WTC11 (cell line): ENCODE measurements at regions of chr7 and their contacts with region 1.

Region 1: DNA sequence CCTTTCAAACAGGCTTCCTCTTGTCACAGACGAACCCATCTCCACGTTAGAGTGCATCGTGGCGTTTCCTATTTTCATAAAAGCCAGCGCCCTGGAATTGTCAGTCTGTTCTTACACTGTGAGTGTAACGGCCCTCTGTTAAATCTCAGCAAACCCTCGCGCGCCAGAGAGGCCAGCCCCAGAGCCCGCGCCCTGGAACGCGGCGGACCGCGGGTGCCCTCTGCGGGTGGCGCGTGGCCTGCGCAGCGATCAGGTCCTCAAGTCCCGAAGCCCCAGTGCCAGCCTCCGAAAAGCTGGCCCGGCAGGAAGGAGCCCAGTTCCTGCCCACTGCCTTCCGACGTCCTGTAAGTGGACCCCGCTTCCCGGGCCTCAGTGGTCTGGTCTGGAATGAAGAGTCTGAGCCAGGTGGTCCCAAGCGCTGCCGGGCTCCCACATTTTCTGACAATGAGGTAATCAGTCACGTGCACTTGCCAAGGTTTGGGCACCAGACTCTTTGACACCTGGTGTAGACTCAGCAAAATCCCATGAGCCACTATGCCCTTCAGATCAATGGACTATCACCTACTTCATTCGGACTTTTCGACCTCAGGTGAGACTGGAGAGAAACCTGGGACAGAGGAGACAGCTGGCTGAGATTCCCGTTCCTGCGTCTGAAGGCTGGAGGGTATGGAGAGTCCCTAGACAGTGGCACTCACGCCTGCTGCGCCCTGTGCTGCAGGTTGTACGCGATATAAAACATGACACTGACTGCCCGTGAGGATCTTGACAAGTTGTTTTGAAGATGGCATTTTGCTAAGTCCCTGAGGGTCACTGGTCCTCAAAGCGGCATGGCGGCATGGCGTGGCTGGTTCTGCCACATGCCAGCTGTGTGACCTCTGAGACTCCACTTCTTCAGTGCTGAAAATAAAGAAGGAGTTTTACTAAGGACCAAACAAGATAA is 109.4 kb upstream of the LANCL2 start:
- DNase-seq: peak; percentile 81
- ATAC-seq: peak; percentile 68
- H3K4me3 Mint-ChIP-seq: peak overlapping the region; percentile 85
- H3K27ac Mint-ChIP-seq: no peak overlapping the region
- H3K4me1 Mint-ChIP-seq: peaks cover 6% of the 10 kb centered on the region
- H3K27me3 Mint-ChIP-seq: peaks cover 57% of the 10 kb centered on the region
- CTCF ChIP-seq: peak; percentile 50; the same call in 1 of the 2 replicates

Region 2: GRCh38 chr7:54773472-54774399 is 482.0 kb before region 1 on chr7:
- CTCF ChIA-PET with region 1: interaction called, 22 read pairs
- POLR2A ChIA-PET with region 1: no interaction called
- DNase-seq: peak; percentile 89
- ATAC-seq: peak; percentile 95
- H3K4me3 Mint-ChIP-seq: peak overlapping the region; percentile 45
- H3K27ac Mint-ChIP-seq: no peak overlapping the region
- H3K4me1 Mint-ChIP-seq: peaks cover 5% of the 10 kb centered on the region
- H3K27me3 Mint-ChIP-seq: peaks cover 32% of the 10 kb centered on the region
- CTCF ChIP-seq: peak; percentile 72

Region 3: GRCh38 chr7:54877683-54878082 is 378.1 kb before region 1 on chr7:
- CTCF ChIA-PET with region 1: interaction called, 11 read pairs
- POLR2A ChIA-PET with region 1: no interaction called
- DNase-seq: no peak
- ATAC-seq: no peak; the same call in 1 of the 2 replicates
- H3K4me3 Mint-ChIP-seq: no peak overlapping the region
- H3K27ac Mint-ChIP-seq: no peak overlapping the region
- H3K4me1 Mint-ChIP-seq: peaks cover 25% of the 10 kb centered on the region
- H3K27me3 Mint-ChIP-seq: no peaks in the 10 kb centered on the region
- CTCF ChIP-seq: no peak

Region 4: GRCh38 chr7:55065079-55065478 is 190.7 kb before region 1 on chr7:
- CTCF ChIA-PET with region 1: interaction called, 17 read pairs
- POLR2A ChIA-PET with region 1: no interaction called
- DNase-seq: no peak
- ATAC-seq: no peak
- H3K4me3 Mint-ChIP-seq: no peak overlapping the region
- H3K27ac Mint-ChIP-seq: no peak overlapping the region
- H3K4me1 Mint-ChIP-seq: peaks cover 20% of the 10 kb centered on the region
- H3K27me3 Mint-ChIP-seq: no peaks in the 10 kb centered on the region
- CTCF ChIP-seq: no peak

Region 5: DNA sequence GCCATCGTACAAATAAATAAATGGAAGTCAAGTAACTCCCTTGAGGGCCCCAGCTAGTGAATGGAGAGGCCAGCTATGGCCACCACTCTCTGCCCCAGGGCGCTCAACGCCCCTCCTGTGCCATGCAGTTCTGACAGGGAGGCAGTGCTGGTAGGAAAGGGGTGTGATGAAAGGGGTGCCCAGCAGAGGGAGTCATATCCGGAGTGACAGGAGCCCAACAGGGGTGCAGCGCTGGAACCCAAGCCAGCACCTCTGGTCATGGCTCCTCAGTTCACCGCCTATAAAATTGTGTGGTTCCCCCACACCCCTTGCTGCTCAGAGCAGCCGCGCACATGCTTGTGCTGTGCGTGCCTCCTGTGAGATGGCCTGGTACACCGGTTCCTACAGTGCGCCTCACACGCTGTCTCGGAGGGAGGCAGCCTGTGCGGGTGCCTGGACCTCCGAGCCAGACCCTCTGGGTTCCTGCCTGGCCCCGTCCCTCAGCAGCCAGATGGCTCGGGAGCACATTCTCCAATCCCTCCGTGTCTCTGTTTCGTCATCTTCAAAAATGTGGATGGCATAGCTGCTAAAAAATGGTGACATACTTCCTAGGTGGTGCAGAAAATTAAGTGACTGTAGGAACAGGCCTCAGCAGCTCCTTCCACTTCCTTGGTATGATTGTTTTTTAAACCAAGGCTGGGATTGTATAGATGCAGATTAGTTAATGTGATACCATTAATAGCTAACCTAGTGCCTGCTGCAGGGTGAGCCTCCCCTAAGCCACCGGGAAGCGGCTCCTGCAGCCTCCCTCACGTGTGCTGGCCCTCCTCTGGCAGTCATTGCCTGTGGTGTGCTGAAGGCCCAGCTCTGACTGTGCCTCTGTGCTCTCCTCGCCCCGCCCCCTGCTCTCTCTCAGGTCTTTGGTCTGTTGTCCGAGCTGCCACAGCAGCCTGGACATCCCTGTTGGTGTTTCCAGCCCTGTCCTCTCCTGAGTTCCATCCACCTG is 111.1 kb before region 1 on chr7:
- CTCF ChIA-PET with region 1: interaction called, 67 read pairs
- POLR2A ChIA-PET with region 1: no interaction called
- DNase-seq: peak; percentile 69
- ATAC-seq: peak; percentile 92
- H3K4me3 Mint-ChIP-seq: no peak overlapping the region
- H3K27ac Mint-ChIP-seq: no peak overlapping the region
- H3K4me1 Mint-ChIP-seq: peaks cover 3% of the 10 kb centered on the region; the same call in 1 of the 2 replicates
- H3K27me3 Mint-ChIP-seq: no peaks in the 10 kb centered on the region
- CTCF ChIP-seq: peak; percentile 43; the same call in 1 of the 2 replicates

Region 6: DNA sequence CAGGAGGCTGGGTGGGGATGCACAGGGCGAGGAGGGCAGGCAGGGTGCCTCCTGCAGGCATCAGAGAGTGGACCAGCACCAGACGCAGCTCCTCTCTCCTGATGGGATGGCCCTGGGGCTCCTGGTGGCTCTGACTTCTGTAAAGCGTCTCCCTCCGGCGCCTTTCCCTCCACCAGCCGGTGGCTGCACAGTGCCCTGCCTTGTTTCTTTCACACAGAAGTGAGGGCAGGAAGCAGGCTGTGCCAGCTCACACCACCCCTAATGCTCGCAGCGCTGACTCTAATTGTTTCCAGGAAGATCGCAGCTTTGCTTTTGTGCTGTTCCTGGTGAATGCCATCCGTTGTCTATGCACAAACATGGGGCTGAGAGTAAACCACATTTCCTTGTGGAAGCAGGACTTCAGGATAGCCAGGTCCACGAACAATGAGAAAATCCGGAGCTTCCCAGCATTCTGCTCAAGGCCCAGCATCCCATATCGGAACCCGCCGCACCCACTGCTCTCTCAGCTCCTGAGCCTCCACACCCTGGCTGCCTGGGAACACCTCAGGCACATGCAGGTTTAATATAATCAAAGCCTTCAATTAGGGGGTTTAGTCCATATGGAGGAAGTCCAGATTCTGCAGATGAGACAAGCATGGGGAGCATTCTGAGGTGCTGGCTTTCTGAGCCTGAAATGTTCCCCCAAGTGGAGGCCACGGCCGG is 42.8 kb before region 1 on chr7:
- CTCF ChIA-PET with region 1: interaction called, 36 read pairs
- POLR2A ChIA-PET with region 1: no interaction called
- DNase-seq: no peak
- ATAC-seq: peak; percentile 40
- H3K4me3 Mint-ChIP-seq: no peak overlapping the region
- H3K27ac Mint-ChIP-seq: no peak overlapping the region
- H3K4me1 Mint-ChIP-seq: peaks cover 18% of the 10 kb centered on the region
- H3K27me3 Mint-ChIP-seq: no peaks in the 10 kb centered on the region
- CTCF ChIP-seq: no peak

Region 7: GRCh38 chr7:55271069-55271626 is 15.4 kb after region 1 on chr7:
- CTCF ChIA-PET with region 1: interaction called, 29 read pairs
- POLR2A ChIA-PET with region 1: no interaction called
- DNase-seq: no peak
- ATAC-seq: peak; percentile 38; the same call in 1 of the 2 replicates
- H3K4me3 Mint-ChIP-seq: no peak overlapping the region
- H3K27ac Mint-ChIP-seq: no peak overlapping the region
- H3K4me1 Mint-ChIP-seq: no peaks in the 10 kb centered on the region
- H3K27me3 Mint-ChIP-seq: no peaks in the 10 kb centered on the region
- CTCF ChIP-seq: no peak

Region 8: DNA sequence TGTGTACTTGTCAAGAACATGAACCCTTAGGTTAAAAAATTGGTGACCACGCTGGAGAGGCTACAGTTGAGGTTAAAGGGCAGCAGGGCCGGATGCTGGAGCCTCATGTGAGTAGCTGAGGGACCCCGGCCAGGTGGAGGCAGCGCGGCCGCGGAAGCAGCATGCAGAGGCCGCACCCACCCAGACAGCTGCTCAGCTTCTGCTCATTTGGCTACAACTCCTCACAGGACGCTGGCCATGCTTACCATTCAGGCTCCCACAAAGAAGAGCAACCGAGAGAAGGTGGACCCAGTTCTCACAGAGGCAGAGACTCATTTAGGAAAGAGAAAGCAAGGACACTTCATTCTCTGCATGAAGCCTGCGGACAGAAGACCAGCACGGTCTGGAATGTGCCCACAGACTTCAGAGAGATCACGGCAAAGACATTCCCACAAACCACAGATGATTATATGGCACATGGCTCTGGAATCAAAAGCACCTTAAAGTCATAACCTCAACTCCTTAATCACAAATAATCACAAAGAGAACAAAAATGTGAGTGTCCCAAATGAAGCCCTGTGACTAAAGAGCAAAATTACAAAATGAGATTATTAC is 222.1 kb after region 1 on chr7:
- CTCF ChIA-PET with region 1: no interaction called
- POLR2A ChIA-PET with region 1: no interaction called
- DNase-seq: no peak
- ATAC-seq: peak; percentile 62
- H3K4me3 Mint-ChIP-seq: no peak overlapping the region
- H3K27ac Mint-ChIP-seq: peak overlapping the region; percentile 7; the same call in 1 of the 2 replicates
- H3K4me1 Mint-ChIP-seq: peaks cover 21% of the 10 kb centered on the region
- H3K27me3 Mint-ChIP-seq: no peaks in the 10 kb centered on the region
- CTCF ChIP-seq: no peak